CD8-positive, alpha-beta T cell (primary cell): ENCODE measurements at regions of chr9 and their contacts with region 1.

Region 1: DNA sequence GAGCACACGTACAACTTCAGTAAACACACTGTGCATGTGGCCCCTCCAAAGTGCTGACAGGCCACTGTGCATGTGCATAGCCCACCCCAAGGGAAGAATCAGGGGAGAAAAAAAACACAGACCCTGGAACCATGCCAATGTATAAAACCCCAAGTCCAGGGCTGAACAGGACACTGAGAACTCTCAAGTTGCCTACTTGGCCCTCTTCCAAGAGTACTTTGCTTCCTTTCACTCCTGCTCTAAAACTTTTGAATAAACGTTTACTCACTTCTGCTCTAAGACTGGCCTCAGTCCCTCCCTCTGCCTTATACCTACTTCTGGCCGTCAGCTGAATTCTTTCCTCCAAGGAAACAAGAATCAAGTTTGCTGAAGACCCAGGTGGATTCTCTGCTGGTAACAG is 77.7 kb upstream of the NFIB start:
- DNase-seq: no peak
- ATAC-seq: no peak
- H3K4me3 ChIP-seq: no peak overlapping the region
- H3K4me3 Mint-ChIP-seq: no peak overlapping the region
- H3K27ac ChIP-seq: no peak overlapping the region
- H3K27ac Mint-ChIP-seq: no peak overlapping the region
- H3K4me1 ChIP-seq: no peaks in the 10 kb centered on the region
- H3K4me1 Mint-ChIP-seq: no peaks in the 10 kb centered on the region
- H3K27me3 ChIP-seq: no peaks in the 10 kb centered on the region
- H3K27me3 Mint-ChIP-seq: no peaks in the 10 kb centered on the region
- CTCF ChIP-seq: no peak

Region 2: DNA sequence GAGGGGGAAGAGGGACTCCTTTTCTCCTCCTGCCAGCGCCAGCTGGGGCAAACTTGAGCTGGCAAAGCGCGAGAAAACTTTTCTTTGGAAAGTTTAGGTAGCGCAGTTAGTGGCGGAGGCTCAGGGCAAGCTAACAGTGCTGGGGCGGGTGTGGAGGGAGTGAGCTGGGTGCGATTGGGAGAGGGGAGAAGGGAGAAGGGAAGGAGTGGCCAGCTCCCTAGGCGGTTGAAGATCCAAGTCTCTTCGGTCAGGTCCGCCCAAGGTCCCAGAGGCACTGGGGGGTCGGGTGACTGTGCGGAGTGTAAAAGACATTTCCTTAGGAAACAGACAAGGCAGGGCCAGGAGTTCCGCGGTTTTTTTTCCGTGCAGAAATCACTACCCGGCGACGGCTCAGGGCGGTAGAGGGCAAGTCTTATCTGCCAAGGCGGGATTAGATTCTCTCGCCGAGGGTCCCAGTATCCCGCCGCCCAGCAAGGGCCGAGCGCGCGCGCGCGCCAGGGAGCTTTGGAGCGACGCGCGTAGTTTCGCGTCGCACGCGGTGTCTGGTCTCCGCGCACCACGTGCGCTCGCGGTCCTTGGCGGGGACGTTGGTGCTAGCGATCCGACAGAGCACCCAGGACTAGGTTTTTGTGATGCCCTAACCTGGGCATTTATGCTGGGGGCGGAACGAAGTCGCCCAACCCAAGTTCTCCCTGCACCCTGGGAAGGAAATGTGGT is 44.1 kb before region 1 on chr9:
- CTCF ChIA-PET with region 1: no interaction called
- POLR2A ChIA-PET with region 1: no interaction called
- intact Hi-C with region 1: no loop called
- DNase-seq: no peak
- ATAC-seq: no peak
- H3K4me3 ChIP-seq: no peak overlapping the region
- H3K4me3 Mint-ChIP-seq: no peak overlapping the region
- H3K27ac ChIP-seq: no peak overlapping the region
- H3K27ac Mint-ChIP-seq: no peak overlapping the region
- H3K4me1 ChIP-seq: no peaks in the 10 kb centered on the region
- H3K4me1 Mint-ChIP-seq: peaks cover 6% of the 10 kb centered on the region
- H3K27me3 ChIP-seq: peaks cover 0 to 20% of the 10 kb centered on the region in 2 experiments
- H3K27me3 Mint-ChIP-seq: peaks cover 51% of the 10 kb centered on the region
- CTCF ChIP-seq: no peak

Region 3: GRCh38 chr9:14358523-14358922 is 33.1 kb before region 1 on chr9:
- CTCF ChIA-PET with region 1: no interaction called
- POLR2A ChIA-PET with region 1: no interaction called
- intact Hi-C with region 1: loop called in 1 of 2 experiments (anchors 5 kb)
- DNase-seq: no peak
- ATAC-seq: no peak
- H3K4me3 ChIP-seq: no peak overlapping the region
- H3K4me3 Mint-ChIP-seq: no peak overlapping the region
- H3K27ac ChIP-seq: no peak overlapping the region
- H3K27ac Mint-ChIP-seq: no peak overlapping the region
- H3K4me1 ChIP-seq: no peaks in the 10 kb centered on the region
- H3K4me1 Mint-ChIP-seq: no peaks in the 10 kb centered on the region
- H3K27me3 ChIP-seq: no peaks in the 10 kb centered on the region
- H3K27me3 Mint-ChIP-seq: peaks cover 13% of the 10 kb centered on the region
- CTCF ChIP-seq: no peak

Region 4: DNA sequence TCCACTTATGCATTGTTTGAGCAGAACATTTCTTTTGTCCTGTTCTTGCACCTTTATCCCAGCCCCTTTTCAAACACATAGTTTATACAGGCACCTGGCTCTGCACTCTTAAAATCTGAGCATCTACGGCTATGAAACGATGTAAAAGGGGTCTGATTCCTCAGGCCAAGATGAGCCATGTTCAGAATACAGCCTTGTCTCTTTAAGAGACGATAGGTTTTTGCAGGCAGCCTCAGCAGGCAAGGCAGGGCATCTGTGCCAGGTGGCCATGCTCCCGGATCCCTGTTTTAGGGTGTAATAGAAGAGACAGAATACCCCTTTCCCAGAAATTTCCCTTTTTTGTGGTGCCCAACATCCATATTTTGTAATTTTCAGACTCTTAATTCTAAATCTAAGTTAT is 11.5 kb after region 1 on chr9:
- CTCF ChIA-PET with region 1: no interaction called
- POLR2A ChIA-PET with region 1: no interaction called
- intact Hi-C with region 1: no loop called
- DNase-seq: no peak
- ATAC-seq: no peak
- H3K4me3 ChIP-seq: no peak overlapping the region
- H3K4me3 Mint-ChIP-seq: no peak overlapping the region
- H3K27ac ChIP-seq: no peak overlapping the region
- H3K27ac Mint-ChIP-seq: no peak overlapping the region
- H3K4me1 ChIP-seq: no peaks in the 10 kb centered on the region
- H3K4me1 Mint-ChIP-seq: no peaks in the 10 kb centered on the region
- H3K27me3 ChIP-seq: no peaks in the 10 kb centered on the region
- H3K27me3 Mint-ChIP-seq: peaks cover 7% of the 10 kb centered on the region
- CTCF ChIP-seq: no peak

Region 5: DNA sequence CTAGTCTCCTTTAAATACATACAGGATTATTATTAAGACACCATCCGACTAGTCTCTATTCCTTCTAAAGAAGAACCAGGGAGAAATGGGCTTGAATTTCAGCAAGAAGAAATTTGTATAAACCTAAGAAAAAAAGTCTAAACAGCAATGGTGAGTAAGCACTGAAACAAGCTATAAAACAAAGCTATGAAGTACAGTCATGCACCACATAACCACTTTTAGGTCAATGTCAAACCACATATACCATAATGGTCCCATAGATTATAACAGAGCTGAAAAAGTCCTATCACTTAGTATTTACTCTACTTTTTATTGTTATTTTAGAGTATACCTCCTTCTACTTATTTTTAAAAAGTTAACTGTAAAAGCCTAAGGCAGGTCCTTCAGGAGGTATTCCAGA is 24.3 kb after region 1 on chr9:
- CTCF ChIA-PET with region 1: no interaction called
- POLR2A ChIA-PET with region 1: no interaction called
- intact Hi-C with region 1: loop called in 1 of 2 experiments (anchors 2 kb)
- DNase-seq: no peak
- ATAC-seq: no peak
- H3K4me3 ChIP-seq: no peak overlapping the region
- H3K4me3 Mint-ChIP-seq: no peak overlapping the region
- H3K27ac ChIP-seq: no peak overlapping the region
- H3K27ac Mint-ChIP-seq: no peak overlapping the region
- H3K4me1 ChIP-seq: no peaks in the 10 kb centered on the region
- H3K4me1 Mint-ChIP-seq: no peaks in the 10 kb centered on the region
- H3K27me3 ChIP-seq: no peaks in the 10 kb centered on the region
- H3K27me3 Mint-ChIP-seq: no peaks in the 10 kb centered on the region
- CTCF ChIP-seq: no peak